Activated T-helper 2 cell treated with anti-CD3 and anti-CD28 coated beads, Interferon-gamma antibody, Interleukin-2, Interleukin-4, amounts not matched to agents 10 μg/mL and 5 μg/mL and 100 μg/mL, durations not matched to agents 14 hours and 24 hours and 36 hours (primary cell): ENCODE measurements at regions of chr2 and their contacts with region 1.

Region 1: GRCh38 chr2:102114290-102114721 is 28.2 kb upstream of the IL1R1 start:
- DNase-seq: no peak
- H3K4me3 Mint-ChIP-seq: no peak overlapping the region
- H3K27ac Mint-ChIP-seq: no peak overlapping the region
- H3K4me1 Mint-ChIP-seq: peaks cover 25% of the 10 kb centered on the region
- H3K27me3 Mint-ChIP-seq: peaks cover 43% of the 10 kb centered on the region

Region 2: GRCh38 chr2:101991721-101992145 is 122.6 kb before region 1 on chr2 and contains the start of gene IL1R2:
- intact Hi-C with region 1: no loop called
- DNase-seq: no peak
- H3K4me3 Mint-ChIP-seq: no peak within 1 kb of the TSS
- H3K27ac Mint-ChIP-seq: no peak within 1 kb of the TSS
- H3K4me1 Mint-ChIP-seq: peaks cover 8% of the 10 kb centered on the region
- H3K27me3 Mint-ChIP-seq: peaks cover 24% of the 10 kb centered on the region
- total RNA-seq, gene IL1R2: 0.97 and 1.8 TPM in 2 replicates

Region 3: GRCh38 chr2:102103992-102104871 is 10.1 kb before region 1 on chr2:
- intact Hi-C with region 1: loop called (anchors 1 kb)
- DNase-seq: no peak
- H3K4me3 Mint-ChIP-seq: peak overlapping the region; percentile 67
- H3K27ac Mint-ChIP-seq: no peak overlapping the region
- H3K4me1 Mint-ChIP-seq: peaks cover 25% of the 10 kb centered on the region
- H3K27me3 Mint-ChIP-seq: peaks cover 50% of the 10 kb centered on the region